A549 (cell line): ENCODE measurements at regions of chr7 and their contacts with region 1.

Region 1: DNA sequence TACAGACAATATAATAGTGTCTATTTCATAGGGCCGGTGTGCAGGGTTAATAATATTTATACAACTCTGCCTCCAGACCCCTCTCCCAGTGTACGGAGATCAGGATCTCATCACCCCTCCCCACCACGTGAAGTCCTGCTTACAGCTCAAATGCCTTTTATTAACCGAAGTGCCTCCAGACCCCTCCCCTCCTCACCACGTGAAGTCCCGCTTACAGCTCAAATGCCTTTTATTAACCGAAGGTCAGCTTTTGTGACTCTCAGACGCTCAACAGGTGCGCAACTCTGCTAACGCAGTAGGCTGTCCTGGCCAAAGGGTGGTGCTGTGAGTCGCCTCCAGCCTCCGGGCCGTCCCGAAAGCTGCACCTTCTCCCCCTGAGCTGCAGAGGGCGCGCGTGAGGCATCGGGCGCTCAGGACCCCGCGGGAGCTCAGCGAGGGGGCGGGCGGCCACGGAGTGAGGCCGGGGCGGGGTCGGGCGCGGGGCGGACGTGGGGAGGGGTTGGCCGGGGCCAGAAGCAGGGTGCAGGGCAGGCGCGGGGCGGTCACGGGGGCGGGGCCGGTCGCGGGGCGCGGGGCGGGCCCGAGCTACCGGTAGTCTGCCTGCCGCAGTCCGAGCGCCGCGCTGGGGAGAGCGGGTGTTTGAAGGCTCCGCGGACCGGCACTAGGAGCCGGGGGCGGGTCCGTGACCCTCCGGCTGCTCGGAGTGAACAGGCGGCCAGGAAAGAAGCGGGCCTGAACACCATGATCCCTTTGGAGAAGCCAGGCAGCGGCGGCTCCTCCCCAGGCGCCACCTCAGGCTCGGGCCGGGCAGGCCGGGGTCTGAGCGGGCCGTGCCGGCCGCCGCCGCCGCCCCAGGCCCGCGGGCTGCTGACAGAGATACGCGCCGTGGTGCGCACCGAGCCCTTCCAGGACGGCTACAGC is at the start of gene STK17A:
- DNase-seq: peak; percentile 75 to 93
- ATAC-seq: peak; percentile 85 to 91
- H3K4me3 ChIP-seq: peak within 1 kb of the TSS; percentile 88
- H3K27ac ChIP-seq: peak within 1 kb of the TSS; percentile 87 to 94
- H3K4me1 ChIP-seq: peaks cover 39% of the 10 kb centered on the region
- CTCF ChIP-seq: peak; percentile 99
- EP300 ChIP-seq: no peak
- POLR2A ChIP-seq: peak; percentile 97
- RAD21 ChIP-seq: peak; percentile 96 to 100
- polyA plus RNA-seq, gene STK17A: 20.2 and 27.3 TPM in 2 replicates

Region 2: DNA sequence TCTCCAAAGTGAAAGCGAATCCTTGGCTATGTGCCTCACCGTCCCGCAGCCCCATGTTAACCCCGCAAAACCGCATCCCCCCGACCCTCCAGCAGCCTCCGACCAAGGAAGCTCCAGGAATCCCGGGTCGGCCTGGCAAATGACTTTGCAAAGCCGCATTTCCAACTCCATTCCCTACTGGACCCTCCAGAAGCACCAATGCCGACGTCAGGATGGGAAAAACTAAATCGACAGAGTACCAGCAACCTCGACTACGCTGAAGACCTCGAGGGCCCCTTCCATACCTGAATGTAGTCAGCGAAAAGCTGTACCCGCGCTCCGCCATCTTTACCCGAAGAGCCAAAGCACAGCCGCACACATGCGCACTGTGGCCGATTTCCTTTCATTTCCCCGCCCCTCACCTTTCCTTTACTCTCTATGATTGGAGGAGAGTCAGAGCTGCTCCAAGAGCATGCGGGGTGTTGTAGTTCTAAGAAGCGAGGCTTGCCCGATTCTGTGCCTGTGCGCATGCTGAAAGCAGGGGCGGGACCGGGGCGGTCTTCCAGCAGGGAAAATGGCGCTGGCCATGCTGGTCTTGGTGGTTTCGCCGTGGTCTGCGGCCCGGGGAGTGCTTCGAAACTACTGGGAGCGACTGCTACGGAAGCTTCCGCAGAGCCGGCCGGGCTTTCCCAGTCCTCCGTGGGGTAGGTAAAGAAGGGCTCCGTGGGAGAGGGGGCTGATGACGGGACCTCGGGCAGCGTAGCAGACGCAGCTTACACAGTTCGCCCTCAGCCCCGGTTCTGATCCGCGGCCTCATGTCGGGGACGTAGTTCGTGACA is 650.7 kb before region 1 on chr7 and contains the starts of genes MRPL32 and PSMA2:
- CTCF ChIA-PET with region 1: interaction called, 10 read pairs
- POLR2A ChIA-PET with region 1: interaction called, 4 read pairs
- DNase-seq: peak; percentile 96 to 99
- ATAC-seq: peak; percentile 99 to 100
- H3K4me3 ChIP-seq: peak within 1 kb of the TSS; percentile 85
- H3K27ac ChIP-seq: peak within 1 kb of the TSS; percentile 87 to 93
- H3K4me1 ChIP-seq: peaks cover 21% of the 10 kb centered on the region; the same call in 2 of the 3 replicates
- CTCF ChIP-seq: no peak
- EP300 ChIP-seq: no peak
- POLR2A ChIP-seq: peak; percentile 90
- RAD21 ChIP-seq: no peak
- polyA plus RNA-seq, gene MRPL32: 68.1 and 90.4 TPM in 2 replicates
- polyA plus RNA-seq, gene PSMA2: 241 and 324 TPM in 2 replicates

Region 3: DNA sequence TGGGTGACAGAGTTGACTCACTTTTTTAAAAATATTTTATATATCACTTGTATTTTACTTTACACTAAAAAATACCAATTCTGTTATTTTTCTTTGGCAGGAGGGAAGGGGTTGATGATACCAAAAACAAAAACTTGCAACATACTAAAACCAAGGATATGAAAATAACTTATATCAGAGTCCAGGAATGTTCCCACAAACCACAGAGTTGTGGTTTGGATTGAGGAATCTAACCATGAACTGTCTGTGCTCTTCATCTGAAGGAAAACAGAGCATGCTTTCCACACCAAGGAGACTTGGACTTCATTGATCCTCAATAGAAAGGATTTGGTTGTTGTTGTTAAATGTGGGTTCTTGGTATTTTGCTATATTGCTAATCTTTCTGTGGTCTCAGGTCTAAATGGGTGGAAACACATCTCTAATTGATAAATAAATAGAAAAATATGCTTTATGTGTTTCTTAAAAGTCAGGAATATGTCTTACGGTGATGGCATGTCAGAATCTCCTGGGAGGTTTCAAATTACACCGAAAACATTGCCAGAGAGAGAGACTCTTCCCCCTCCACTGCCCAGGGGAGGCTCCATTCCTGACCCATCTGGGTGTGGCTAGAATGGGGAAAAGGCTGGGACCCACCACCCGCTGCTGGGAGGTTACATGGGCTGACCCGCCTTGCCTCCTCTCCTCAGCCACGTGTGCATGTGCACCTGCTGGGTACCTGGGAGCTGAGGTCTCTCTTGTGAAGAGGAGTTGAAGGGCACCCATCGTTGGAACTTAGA is 46.8 kb before region 1 on chr7:
- CTCF ChIA-PET with region 1: no interaction called
- POLR2A ChIA-PET with region 1: no interaction called
- DNase-seq: no peak
- ATAC-seq: no peak
- H3K4me3 ChIP-seq: no peak overlapping the region
- H3K27ac ChIP-seq: no peak overlapping the region
- H3K4me1 ChIP-seq: no peaks in the 10 kb centered on the region
- CTCF ChIP-seq: no peak
- EP300 ChIP-seq: no peak
- POLR2A ChIP-seq: no peak
- RAD21 ChIP-seq: no peak

Region 4: DNA sequence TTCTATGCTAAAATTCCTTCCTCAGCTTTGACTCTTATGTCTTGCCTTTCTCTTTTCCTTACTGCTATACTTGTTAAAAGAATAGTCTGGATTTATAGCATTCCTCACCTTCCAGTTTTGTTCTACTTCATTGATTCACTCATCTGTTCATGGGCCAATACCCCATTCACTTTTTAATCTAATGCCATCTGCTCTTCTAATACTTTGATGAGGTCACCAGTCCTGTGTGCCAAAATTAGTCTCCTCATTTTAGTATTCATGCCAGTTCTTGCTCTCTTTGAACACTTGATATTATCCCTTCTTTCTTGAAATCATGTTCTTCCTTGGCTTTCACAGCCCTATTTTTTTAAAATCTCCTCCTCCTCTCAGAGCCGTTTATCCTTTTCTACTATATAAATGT is 19.5 kb after region 1 on chr7:
- CTCF ChIA-PET with region 1: interaction called, 66 read pairs
- POLR2A ChIA-PET with region 1: interaction called, 10 read pairs
- DNase-seq: no peak
- ATAC-seq: no peak
- H3K4me3 ChIP-seq: no peak overlapping the region
- H3K27ac ChIP-seq: no peak overlapping the region
- H3K4me1 ChIP-seq: no peaks in the 10 kb centered on the region
- CTCF ChIP-seq: no peak
- EP300 ChIP-seq: no peak
- POLR2A ChIP-seq: no peak
- RAD21 ChIP-seq: no peak

Region 5: DNA sequence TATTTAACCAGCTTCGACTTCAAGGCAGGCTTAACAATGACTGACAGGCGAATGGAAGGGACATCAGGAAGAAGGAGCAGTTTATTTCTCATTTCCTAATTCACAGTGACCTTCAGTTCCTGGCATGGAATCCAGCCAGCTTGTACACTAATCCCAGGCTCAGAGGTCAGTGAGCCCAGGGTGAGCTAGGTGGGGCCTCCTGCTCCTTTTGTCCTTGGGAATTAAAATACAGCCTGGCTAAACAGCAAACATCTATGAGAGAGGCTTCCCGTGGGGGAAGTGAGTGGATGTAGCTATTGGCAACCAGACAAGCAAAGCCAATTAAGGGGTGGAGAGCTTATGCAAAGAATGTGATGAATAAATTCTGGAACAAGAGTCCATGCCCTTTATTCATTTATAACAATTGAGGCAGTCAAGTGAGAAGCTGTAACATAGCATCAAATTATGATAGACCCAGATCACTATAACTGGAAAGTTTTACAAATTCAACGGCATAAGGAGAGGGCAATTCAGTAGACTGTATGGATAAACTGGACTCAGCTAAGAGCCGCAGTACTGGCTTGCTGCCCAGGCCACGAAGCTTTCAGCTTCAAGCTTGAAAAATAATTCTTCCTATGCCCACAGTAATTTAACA is 57.2 kb after region 1 on chr7:
- CTCF ChIA-PET with region 1: interaction called, 12 read pairs
- POLR2A ChIA-PET with region 1: interaction called, 5 read pairs
- DNase-seq: peak in 1 of 2 experiments; percentile 32
- ATAC-seq: peak; percentile 25 to 37; a peak in 3 of 6 replicates
- H3K4me3 ChIP-seq: no peak overlapping the region
- H3K27ac ChIP-seq: peak overlapping the region in 1 of 2 experiments; percentile 17; a peak in 2 of 6 replicates
- H3K4me1 ChIP-seq: peaks cover 28% of the 10 kb centered on the region; the same call in 2 of the 3 replicates
- CTCF ChIP-seq: no peak
- EP300 ChIP-seq: no peak
- POLR2A ChIP-seq: no peak
- RAD21 ChIP-seq: no peak

Region 6: DNA sequence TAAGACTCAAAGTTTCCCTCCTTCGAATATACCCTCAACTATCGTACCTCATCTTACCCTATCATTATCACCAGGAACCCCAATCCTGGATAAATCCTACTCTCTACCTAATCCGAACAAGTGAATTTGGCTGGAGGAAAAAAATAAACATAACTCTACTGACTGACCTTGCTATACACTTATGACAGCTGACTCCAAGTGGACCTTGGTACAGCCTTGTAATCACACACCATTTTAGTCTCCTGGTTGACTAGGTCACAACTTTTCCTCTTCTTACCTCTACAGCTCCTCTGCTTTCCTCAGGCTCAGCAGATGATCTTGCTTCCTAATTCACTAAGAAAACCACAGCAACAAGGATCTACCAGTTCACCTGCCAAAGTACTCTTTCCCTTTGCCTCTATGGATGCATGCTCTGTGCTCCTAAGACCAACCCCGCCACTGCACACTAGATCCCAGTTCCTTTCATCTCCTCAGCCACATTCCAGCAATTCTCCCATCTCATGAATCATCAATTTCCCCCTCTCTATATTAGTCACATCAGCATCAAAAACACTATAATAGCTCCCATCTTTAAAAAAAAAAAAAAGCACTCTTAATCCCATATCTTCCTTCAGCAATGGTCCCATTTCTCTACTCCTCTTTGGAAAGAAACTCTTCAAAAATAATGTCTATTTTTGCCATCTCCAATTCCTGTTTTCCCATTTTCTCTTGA is 111.1 kb after region 1 on chr7:
- CTCF ChIA-PET with region 1: interaction called, 261 read pairs
- POLR2A ChIA-PET with region 1: interaction called, 120 read pairs
- DNase-seq: peak; percentile 31 to 44
- ATAC-seq: peak; percentile 68 to 80
- H3K4me3 ChIP-seq: no peak overlapping the region
- H3K27ac ChIP-seq: peak overlapping the region; percentile 64 to 85
- H3K4me1 ChIP-seq: peaks cover 67% of the 10 kb centered on the region
- CTCF ChIP-seq: no peak
- EP300 ChIP-seq: no peak
- POLR2A ChIP-seq: no peak
- RAD21 ChIP-seq: no peak

Region 7: GRCh38 chr7:43729214-43729923 is 146.6 kb after region 1 on chr7 and contains the start of gene COA1:
- CTCF ChIA-PET with region 1: interaction called, 10 read pairs
- POLR2A ChIA-PET with region 1: interaction called, 36 read pairs
- DNase-seq: peak; percentile 77 to 95
- ATAC-seq: peak; percentile 98 to 99
- H3K4me3 ChIP-seq: peak within 1 kb of the TSS; percentile 57
- H3K27ac ChIP-seq: peak within 1 kb of the TSS; percentile 85 to 98
- H3K4me1 ChIP-seq: peaks cover 7% of the 10 kb centered on the region; the same call in 2 of the 3 replicates
- CTCF ChIP-seq: no peak
- EP300 ChIP-seq: no peak
- POLR2A ChIP-seq: peak; percentile 81
- RAD21 ChIP-seq: no peak; a peak in 2 of 5 replicates
- polyA plus RNA-seq, gene COA1: 57.5 and 84.0 TPM in 2 replicates

Region 8: GRCh38 chr7:43844031-43844656 is 261.4 kb after region 1 on chr7:
- CTCF ChIA-PET with region 1: interaction called, 85 read pairs
- POLR2A ChIA-PET with region 1: interaction called, 4 read pairs
- DNase-seq: no peak
- ATAC-seq: no peak
- H3K4me3 ChIP-seq: no peak overlapping the region
- H3K27ac ChIP-seq: no peak overlapping the region
- H3K4me1 ChIP-seq: no peaks in the 10 kb centered on the region
- CTCF ChIP-seq: no peak
- EP300 ChIP-seq: no peak
- POLR2A ChIP-seq: no peak
- RAD21 ChIP-seq: no peak